ENCODE measurements at regions of chr3 and their contacts with region 1.

Region 1: DNA sequence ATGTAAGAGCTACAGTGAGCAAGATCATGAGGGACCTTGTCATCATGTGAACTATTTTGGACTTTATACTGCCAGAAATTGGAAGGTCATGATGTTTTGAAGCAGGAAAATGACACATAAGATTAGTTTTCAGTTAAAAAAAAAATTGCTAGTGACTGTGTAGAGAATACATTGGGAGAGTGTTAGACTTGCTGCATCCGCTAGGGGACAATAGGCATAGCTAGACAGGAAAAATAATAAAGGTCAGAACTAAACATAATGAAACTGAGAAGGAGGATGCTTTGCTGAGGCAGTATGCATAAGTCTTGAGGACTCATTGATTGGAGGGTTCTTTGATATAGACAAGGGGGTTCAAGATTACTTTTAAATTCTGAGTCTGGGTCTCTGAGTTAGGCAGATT is 275.8 kb upstream of the KCNH8 start:
- DNase-seq: no peak
- H3K4me3 Mint-ChIP-seq: no peak overlapping the region
- H3K27ac Mint-ChIP-seq: no peak overlapping the region
- H3K4me1 Mint-ChIP-seq: peaks cover 51% of the 10 kb centered on the region
- H3K27me3 Mint-ChIP-seq: no peaks in the 10 kb centered on the region

Region 2: GRCh38 chr3:17742108-17742879 is 1130.2 kb before region 1 on chr3 and contains the start of gene TBC1D5:
- CTCF ChIA-PET with region 1: no interaction called
- intact Hi-C with region 1: loop called (anchors 5 kb)
- DNase-seq: peak; percentile 95
- H3K4me3 Mint-ChIP-seq: peak within 1 kb of the TSS; percentile 92
- H3K27ac Mint-ChIP-seq: peak within 1 kb of the TSS; percentile 94
- H3K4me1 Mint-ChIP-seq: peaks cover 40% of the 10 kb centered on the region
- H3K27me3 Mint-ChIP-seq: no peaks in the 10 kb centered on the region
- total RNA-seq, gene TBC1D5: 54.4 to 57.2 TPM

Region 3: GRCh38 chr3:18351823-18352744 is 520.4 kb before region 1 on chr3:
- CTCF ChIA-PET with region 1: no interaction called
- intact Hi-C with region 1: no loop called
- DNase-seq: no peak
- H3K4me3 Mint-ChIP-seq: no peak overlapping the region
- H3K27ac Mint-ChIP-seq: peak overlapping the region; percentile 73
- H3K4me1 Mint-ChIP-seq: peaks cover 26% of the 10 kb centered on the region
- H3K27me3 Mint-ChIP-seq: no peaks in the 10 kb centered on the region

Region 4: DNA sequence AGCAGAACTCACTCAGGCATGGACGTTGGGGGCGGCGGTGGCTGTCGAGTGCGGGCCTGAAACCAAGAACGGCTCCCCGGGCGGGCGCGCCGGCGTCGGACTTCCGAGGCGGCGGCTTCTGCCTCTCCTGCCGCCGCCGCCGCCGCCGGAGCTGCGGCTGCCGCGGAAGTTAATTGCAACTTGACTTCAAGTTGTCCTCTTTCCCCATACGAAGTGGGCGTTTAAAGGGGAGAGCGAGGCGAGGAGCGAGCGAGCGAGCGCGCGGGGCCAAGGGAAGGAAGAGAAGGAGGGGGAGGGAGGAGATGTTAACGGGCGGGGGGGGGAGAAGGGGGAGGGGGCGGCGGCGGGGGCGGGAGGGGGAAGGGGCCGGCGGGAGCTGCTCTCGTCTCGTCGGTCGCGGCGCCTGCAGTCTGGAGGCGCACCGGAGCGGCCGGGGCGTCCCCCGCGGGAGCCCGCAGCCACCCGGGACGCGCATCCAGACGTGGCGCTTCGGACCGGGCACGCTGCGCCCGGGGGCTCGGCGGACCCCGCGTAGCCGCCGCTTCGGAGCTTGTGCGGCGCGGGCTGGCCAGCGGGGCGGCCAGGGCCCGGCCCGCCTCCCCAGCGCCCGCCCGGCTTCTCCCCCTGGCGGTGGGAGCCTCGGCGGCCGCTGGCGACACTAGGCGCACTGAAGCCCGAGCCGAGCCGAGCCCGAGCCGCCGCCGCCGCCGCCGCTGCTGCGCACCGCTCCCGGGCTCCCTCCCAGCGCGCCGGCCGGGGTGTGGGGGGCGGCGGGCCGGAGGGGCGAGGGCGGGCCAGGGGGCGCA is 427.7 kb before region 1 on chr3:
- CTCF ChIA-PET with region 1: no interaction called
- intact Hi-C with region 1: loop called (anchors 2 kb)
- DNase-seq: peak; percentile 83
- H3K4me3 Mint-ChIP-seq: peak overlapping the region; percentile 94
- H3K27ac Mint-ChIP-seq: peak overlapping the region; percentile 97
- H3K4me1 Mint-ChIP-seq: peaks cover 36% of the 10 kb centered on the region
- H3K27me3 Mint-ChIP-seq: no peaks in the 10 kb centered on the region

Region 5: GRCh38 chr3:18679238-18679637 is 193.2 kb before region 1 on chr3:
- CTCF ChIA-PET with region 1: no interaction called
- intact Hi-C with region 1: loop called (anchors 1 kb)
- DNase-seq: peak; percentile 77
- H3K4me3 Mint-ChIP-seq: peak overlapping the region; percentile 31
- H3K27ac Mint-ChIP-seq: peak overlapping the region; percentile 81
- H3K4me1 Mint-ChIP-seq: peaks cover 81% of the 10 kb centered on the region
- H3K27me3 Mint-ChIP-seq: no peaks in the 10 kb centered on the region

Region 6: DNA sequence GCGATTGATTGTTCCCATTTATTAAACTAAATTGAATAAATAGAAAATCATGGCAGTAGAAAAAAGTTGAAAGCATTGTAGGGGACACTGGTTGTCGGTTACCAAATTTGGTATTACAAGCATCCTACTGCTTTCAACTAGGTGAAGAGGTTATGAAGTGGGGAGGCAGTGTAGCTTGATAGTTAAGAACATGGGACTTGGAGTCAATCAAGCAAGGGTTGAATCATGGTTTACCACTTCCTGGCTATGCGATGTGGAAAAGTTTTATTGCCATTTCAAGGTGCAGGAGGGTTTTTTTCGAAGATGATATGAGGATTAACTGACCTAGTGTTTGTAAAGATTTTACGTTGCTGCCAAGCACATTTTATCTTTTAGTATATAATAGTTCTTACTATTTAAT is 42.4 kb before region 1 on chr3:
- CTCF ChIA-PET with region 1: interaction called, 4 read pairs
- intact Hi-C with region 1: loop called (anchors 1 kb)
- DNase-seq: peak; percentile 60
- H3K4me3 Mint-ChIP-seq: no peak overlapping the region
- H3K27ac Mint-ChIP-seq: peak overlapping the region; percentile 31
- H3K4me1 Mint-ChIP-seq: peaks cover 25% of the 10 kb centered on the region
- H3K27me3 Mint-ChIP-seq: no peaks in the 10 kb centered on the region

Region 7: GRCh38 chr3:19229086-19229485 is 356.6 kb after region 1 on chr3:
- CTCF ChIA-PET with region 1: no interaction called
- intact Hi-C with region 1: no loop called
- DNase-seq: no peak
- H3K4me3 Mint-ChIP-seq: no peak overlapping the region
- H3K27ac Mint-ChIP-seq: no peak overlapping the region
- H3K4me1 Mint-ChIP-seq: peaks cover 3% of the 10 kb centered on the region
- H3K27me3 Mint-ChIP-seq: peaks cover 3% of the 10 kb centered on the region

Region 8: GRCh38 chr3:19946832-19947548 is 1074.5 kb after region 1 on chr3 and contains the start of gene RAB5A:
- CTCF ChIA-PET with region 1: no interaction called
- intact Hi-C with region 1: loop called (anchors 1 kb)
- DNase-seq: peak; percentile 98
- H3K4me3 Mint-ChIP-seq: peak within 1 kb of the TSS; percentile 100
- H3K27ac Mint-ChIP-seq: peak within 1 kb of the TSS; percentile 100
- H3K4me1 Mint-ChIP-seq: peaks cover 43% of the 10 kb centered on the region
- H3K27me3 Mint-ChIP-seq: no peaks in the 10 kb centered on the region
- total RNA-seq, gene RAB5A: 46.4 to 47.5 TPM